CD4-positive, alpha-beta memory T cell (primary cell): ENCODE measurements at regions of chr6 and their contacts with region 1.

Region 1: GRCh38 chr6:37489660-37490361 is 9.9 kb downstream of the CCDC167 start:
- DNase-seq: peak in 3 of 5 donors; percentile 34 to 60 (median 35)
- H3K4me3 ChIP-seq: no peak overlapping the region
- H3K4me3 Mint-ChIP-seq: peak overlapping the region in 7 of 8 donors; percentile 33 to 81 (median 71)
- H3K27ac ChIP-seq: peak overlapping the region; percentile 52
- H3K27ac Mint-ChIP-seq: peak overlapping the region; percentile 92 to 99 (median 97)
- H3K4me1 ChIP-seq: peaks cover 76% of the 10 kb centered on the region
- H3K4me1 Mint-ChIP-seq: peaks cover 40 to 86% (median 72%) of the 10 kb centered on the region in 4 donors
- H3K27me3 ChIP-seq: no peaks in the 10 kb centered on the region
- H3K27me3 Mint-ChIP-seq: no peaks in the 10 kb centered on the region

Region 2: GRCh38 chr6:37507690-37508421 is 18.0 kb after region 1 on chr6:
- CTCF ChIA-PET with region 1: interaction called, 35 read pairs
- POLR2A ChIA-PET with region 1: interaction called, 977 read pairs
- intact Hi-C with region 1: no loop called
- DNase-seq: peak; percentile 63 to 68 (median 65)
- H3K4me3 ChIP-seq: no peak overlapping the region
- H3K4me3 Mint-ChIP-seq: peak overlapping the region in 7 of 8 donors; percentile 10 to 89 (median 59)
- H3K27ac ChIP-seq: peak overlapping the region; percentile 44
- H3K27ac Mint-ChIP-seq: peak overlapping the region; percentile 90 to 99 (median 91)
- H3K4me1 ChIP-seq: peaks cover 92% of the 10 kb centered on the region
- H3K4me1 Mint-ChIP-seq: peaks cover 49 to 93% (median 79%) of the 10 kb centered on the region in 4 donors
- H3K27me3 ChIP-seq: no peaks in the 10 kb centered on the region
- H3K27me3 Mint-ChIP-seq: no peaks in the 10 kb centered on the region

Region 3: DNA sequence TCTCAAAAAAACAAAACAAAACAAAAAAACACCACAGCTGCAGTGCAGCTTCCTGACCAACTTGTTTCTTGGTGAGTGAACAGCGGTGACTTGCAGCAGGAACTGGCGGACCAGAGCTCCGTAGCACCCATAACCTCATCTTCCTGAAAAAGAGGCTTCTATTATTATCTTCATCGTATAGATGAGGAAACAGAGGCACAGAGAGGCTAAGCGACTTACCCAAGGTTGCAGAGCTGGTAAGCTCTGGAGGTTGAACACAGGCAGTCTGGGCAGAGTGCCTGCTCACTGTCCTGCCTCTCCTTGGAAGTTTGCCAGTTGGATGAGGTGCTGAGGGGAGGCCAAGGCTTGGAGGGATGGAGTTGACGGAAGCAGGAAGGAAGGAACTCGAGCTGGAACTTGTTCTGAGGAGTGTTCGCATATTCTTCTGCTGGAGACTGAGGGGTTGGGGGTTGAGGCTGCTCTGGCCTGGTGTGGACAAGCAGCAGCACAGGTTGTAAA is 57.8 kb after region 1 on chr6:
- CTCF ChIA-PET with region 1: interaction called, 13 read pairs
- POLR2A ChIA-PET with region 1: interaction called, 17 read pairs
- intact Hi-C with region 1: no loop called
- DNase-seq: peak in 3 of 5 donors; percentile 25 to 43 (median 39)
- H3K4me3 ChIP-seq: no peak overlapping the region
- H3K4me3 Mint-ChIP-seq: peak overlapping the region; percentile 8 to 75 (median 68)
- H3K27ac ChIP-seq: peak overlapping the region; percentile 13
- H3K27ac Mint-ChIP-seq: peak overlapping the region; percentile 80 to 97 (median 94)
- H3K4me1 ChIP-seq: peaks cover 28% of the 10 kb centered on the region
- H3K4me1 Mint-ChIP-seq: peaks cover 11 to 53% (median 40%) of the 10 kb centered on the region in 4 donors
- H3K27me3 ChIP-seq: no peaks in the 10 kb centered on the region
- H3K27me3 Mint-ChIP-seq: no peaks in the 10 kb centered on the region

Region 4: DNA sequence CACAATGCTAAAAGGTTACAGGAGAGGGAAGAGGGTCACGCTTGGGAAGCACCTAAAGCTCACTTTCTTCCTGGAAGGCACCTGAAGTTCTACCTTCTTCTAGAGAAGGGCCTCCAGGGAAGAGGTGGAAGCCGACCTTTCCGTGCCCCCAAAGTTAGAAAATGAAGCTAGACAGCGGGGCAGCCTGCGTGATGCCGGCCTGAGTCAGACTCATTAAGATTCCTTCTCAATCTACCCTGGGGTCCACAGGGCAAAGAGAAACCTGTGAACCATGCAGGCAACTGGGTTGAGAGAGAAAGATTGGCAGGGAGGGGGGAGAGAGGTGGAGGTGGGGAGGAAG is 64.6 kb after region 1 on chr6:
- CTCF ChIA-PET with region 1: interaction called, 15 read pairs
- POLR2A ChIA-PET with region 1: interaction called, 5 read pairs
- intact Hi-C with region 1: no loop called
- DNase-seq: no peak
- H3K4me3 ChIP-seq: no peak overlapping the region
- H3K4me3 Mint-ChIP-seq: no peak overlapping the region
- H3K27ac ChIP-seq: no peak overlapping the region
- H3K27ac Mint-ChIP-seq: peak overlapping the region in 2 of 7 donors; percentile 21 to 54
- H3K4me1 ChIP-seq: peaks cover 18% of the 10 kb centered on the region
- H3K4me1 Mint-ChIP-seq: peaks cover 18 to 40% (median 30%) of the 10 kb centered on the region in 4 donors
- H3K27me3 ChIP-seq: no peaks in the 10 kb centered on the region
- H3K27me3 Mint-ChIP-seq: no peaks in the 10 kb centered on the region